GM12878 (cell line): ENCODE measurements at regions of chr5 and their contacts with region 1.

Region 1: GRCh38 chr5:126354012-126354857 is 69.0 kb upstream of the GRAMD2B start:
- DNase-seq: peak; percentile 38
- ATAC-seq: peak; percentile 43
- H3K4me3 ChIP-seq: no peak overlapping the region
- H3K27ac ChIP-seq: no peak overlapping the region
- H3K4me1 ChIP-seq: peaks cover 4% of the 10 kb centered on the region; the same call in 1 of the 2 replicates
- H3K27me3 ChIP-seq: no peaks in the 10 kb centered on the region
- CTCF ChIP-seq: peak; percentile 39 to 74 (median 58); a peak in 5 of 6 replicates
- EP300 ChIP-seq: no peak
- POLR2A ChIP-seq: no peak
- RAD21 ChIP-seq: peak; percentile 91

Region 2: GRCh38 chr5:126369967-126370731 is 15.9 kb after region 1 on chr5:
- CTCF ChIA-PET with region 1: interaction called, 6 read pairs
- POLR2A ChIA-PET with region 1: no interaction called
- RAD21 ChIA-PET with region 1: interaction called, 3 read pairs
- SMC1A ChIA-PET with region 1: interaction called, 13 read pairs
- in situ Hi-C with region 1: no loop called
- intact Hi-C with region 1: no loop called
- DNase-seq: no peak
- ATAC-seq: peak; percentile 34; the same call in 1 of the 3 replicates
- H3K4me3 ChIP-seq: no peak overlapping the region
- H3K27ac ChIP-seq: no peak overlapping the region
- H3K4me1 ChIP-seq: no peaks in the 10 kb centered on the region
- H3K27me3 ChIP-seq: no peaks in the 10 kb centered on the region
- CTCF ChIP-seq: no peak
- EP300 ChIP-seq: no peak
- POLR2A ChIP-seq: no peak
- RAD21 ChIP-seq: no peak

Region 3: GRCh38 chr5:126443374-126443851 is 89.2 kb after region 1 on chr5:
- CTCF ChIA-PET with region 1: no interaction called
- POLR2A ChIA-PET with region 1: no interaction called
- RAD21 ChIA-PET with region 1: interaction called, 4 read pairs
- SMC1A ChIA-PET with region 1: interaction called, 4 read pairs
- in situ Hi-C with region 1: no loop called
- intact Hi-C with region 1: loop called (anchors 1 kb)
- DNase-seq: peak; percentile 75
- ATAC-seq: peak; percentile 85
- H3K4me3 ChIP-seq: no peak overlapping the region; the same call in 1 of the 2 replicates
- H3K27ac ChIP-seq: peak overlapping the region; percentile 56; the same call in 1 of the 2 replicates
- H3K4me1 ChIP-seq: peaks cover 36% of the 10 kb centered on the region
- H3K27me3 ChIP-seq: no peaks in the 10 kb centered on the region
- CTCF ChIP-seq: no peak
- EP300 ChIP-seq: peak; percentile 79 to 86; a peak in 3 of 4 replicates
- POLR2A ChIP-seq: no peak
- RAD21 ChIP-seq: 0 out of 2 replicates have a peak, but pooled peaks have one; percentile 3

Region 4: DNA sequence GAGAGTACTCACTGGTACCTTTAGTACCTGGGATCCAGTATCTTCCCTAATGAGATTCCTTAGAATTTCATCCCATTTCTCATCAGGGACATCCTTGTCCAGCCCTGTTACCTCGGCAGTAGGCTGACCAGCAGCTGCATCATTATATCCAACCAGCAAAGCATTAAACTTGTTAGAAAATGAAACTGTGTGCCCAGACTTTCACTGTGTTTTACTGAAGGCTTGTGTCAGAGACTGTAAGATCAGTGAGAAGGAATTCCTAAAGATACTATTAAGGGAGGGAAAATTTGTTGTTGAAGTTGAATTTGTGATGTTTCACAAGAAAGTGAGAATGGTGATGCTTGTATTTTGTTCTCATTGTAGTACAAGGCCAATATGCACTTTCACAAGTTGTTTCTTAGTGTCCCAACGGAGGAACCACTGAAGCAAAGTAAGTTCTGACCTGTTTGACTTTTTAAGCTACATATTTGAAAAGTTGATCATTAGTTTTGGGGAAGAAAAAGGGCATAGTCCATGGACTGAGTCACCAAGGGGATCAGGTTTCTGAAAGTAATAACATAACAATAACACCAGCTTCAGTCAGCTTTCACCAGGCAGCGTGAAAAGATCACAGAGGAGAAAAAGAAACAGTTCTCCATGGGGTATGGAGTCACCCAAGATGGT is 117.8 kb after region 1 on chr5:
- CTCF ChIA-PET with region 1: interaction called, 3 read pairs
- POLR2A ChIA-PET with region 1: no interaction called
- RAD21 ChIA-PET with region 1: no interaction called
- SMC1A ChIA-PET with region 1: interaction called, 11 read pairs
- in situ Hi-C with region 1: no loop called
- intact Hi-C with region 1: no loop called
- DNase-seq: no peak
- ATAC-seq: no peak
- H3K4me3 ChIP-seq: no peak overlapping the region
- H3K27ac ChIP-seq: no peak overlapping the region
- H3K4me1 ChIP-seq: no peaks in the 10 kb centered on the region
- H3K27me3 ChIP-seq: no peaks in the 10 kb centered on the region
- CTCF ChIP-seq: no peak
- EP300 ChIP-seq: no peak
- POLR2A ChIP-seq: no peak
- RAD21 ChIP-seq: no peak

Region 5: DNA sequence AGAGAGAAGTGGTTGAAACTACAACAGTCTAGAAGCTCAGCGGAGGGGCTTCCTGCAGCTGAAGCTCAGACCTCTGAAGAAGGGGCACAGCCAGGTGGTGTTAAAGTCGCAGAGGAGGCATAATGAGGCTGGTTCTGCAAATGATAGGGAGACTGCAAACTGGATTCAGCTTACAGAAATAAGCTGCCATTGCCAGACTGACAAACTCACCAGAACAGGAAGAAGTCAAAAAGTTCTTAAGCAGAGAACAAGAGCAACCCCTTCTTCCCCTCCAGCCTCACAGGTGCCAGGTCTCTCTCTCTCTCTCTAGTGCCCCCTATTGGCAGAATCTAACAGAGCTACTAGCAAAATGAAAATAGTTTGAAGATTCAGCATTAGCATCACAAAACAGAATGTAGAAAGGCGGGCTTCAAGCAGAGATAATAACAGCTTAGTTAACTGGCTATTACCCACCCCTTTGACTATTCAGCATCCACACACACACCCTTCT is 145.7 kb after region 1 on chr5:
- CTCF ChIA-PET with region 1: interaction called, 133 read pairs
- POLR2A ChIA-PET with region 1: interaction called, 3 read pairs
- RAD21 ChIA-PET with region 1: interaction called, 20 read pairs
- SMC1A ChIA-PET with region 1: interaction called, 40 read pairs
- in situ Hi-C with region 1: no loop called
- intact Hi-C with region 1: loop called (anchors 2 kb)
- DNase-seq: no peak
- ATAC-seq: peak; percentile 84
- H3K4me3 ChIP-seq: no peak overlapping the region
- H3K27ac ChIP-seq: no peak overlapping the region
- H3K4me1 ChIP-seq: no peaks in the 10 kb centered on the region
- H3K27me3 ChIP-seq: no peaks in the 10 kb centered on the region
- CTCF ChIP-seq: peak; percentile 54 to 69 (median 69)
- EP300 ChIP-seq: no peak
- POLR2A ChIP-seq: no peak
- RAD21 ChIP-seq: peak; percentile 74

Region 6: DNA sequence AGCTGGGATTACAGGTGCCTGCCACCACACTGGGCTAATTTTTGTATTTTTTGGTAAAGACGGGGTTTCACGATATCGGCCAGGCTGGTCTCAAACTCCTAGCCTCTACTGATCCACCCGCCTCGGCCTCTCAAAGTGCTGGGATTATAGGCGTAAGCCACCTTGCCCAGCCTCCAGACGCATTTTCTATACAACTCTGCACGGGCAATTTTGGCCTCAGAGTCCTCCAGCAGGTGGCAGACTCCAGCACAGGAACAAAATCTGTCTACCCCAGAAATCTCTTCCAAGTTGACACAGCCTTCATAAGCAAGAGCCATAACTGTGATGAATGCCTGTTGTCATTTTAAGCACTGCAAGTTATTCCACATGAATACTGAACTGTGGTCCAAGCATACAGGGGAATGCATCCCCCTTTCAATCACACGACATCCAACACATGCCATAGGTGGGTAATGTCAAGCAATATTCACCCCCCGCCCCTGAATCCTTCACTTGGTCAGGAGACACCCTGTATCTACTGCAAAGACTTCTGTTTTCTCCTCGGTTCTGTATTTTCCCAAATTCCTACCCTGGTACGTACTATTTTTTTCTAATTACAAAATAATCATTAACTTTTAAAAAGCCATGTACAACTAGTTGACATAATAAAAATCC is 190.0 kb after region 1 on chr5:
- CTCF ChIA-PET with region 1: interaction called, 136 read pairs
- POLR2A ChIA-PET with region 1: no interaction called
- RAD21 ChIA-PET with region 1: interaction called, 14 read pairs
- SMC1A ChIA-PET with region 1: interaction called, 18 read pairs
- in situ Hi-C with region 1: loop called (anchors 5 kb)
- intact Hi-C with region 1: loop called (anchors 1 kb)
- DNase-seq: no peak
- ATAC-seq: peak; percentile 90
- H3K4me3 ChIP-seq: no peak overlapping the region
- H3K27ac ChIP-seq: no peak overlapping the region
- H3K4me1 ChIP-seq: no peaks in the 10 kb centered on the region
- H3K27me3 ChIP-seq: no peaks in the 10 kb centered on the region
- CTCF ChIP-seq: peak; percentile 60 to 76 (median 75)
- EP300 ChIP-seq: no peak
- POLR2A ChIP-seq: no peak
- RAD21 ChIP-seq: peak; percentile 64

Region 7: DNA sequence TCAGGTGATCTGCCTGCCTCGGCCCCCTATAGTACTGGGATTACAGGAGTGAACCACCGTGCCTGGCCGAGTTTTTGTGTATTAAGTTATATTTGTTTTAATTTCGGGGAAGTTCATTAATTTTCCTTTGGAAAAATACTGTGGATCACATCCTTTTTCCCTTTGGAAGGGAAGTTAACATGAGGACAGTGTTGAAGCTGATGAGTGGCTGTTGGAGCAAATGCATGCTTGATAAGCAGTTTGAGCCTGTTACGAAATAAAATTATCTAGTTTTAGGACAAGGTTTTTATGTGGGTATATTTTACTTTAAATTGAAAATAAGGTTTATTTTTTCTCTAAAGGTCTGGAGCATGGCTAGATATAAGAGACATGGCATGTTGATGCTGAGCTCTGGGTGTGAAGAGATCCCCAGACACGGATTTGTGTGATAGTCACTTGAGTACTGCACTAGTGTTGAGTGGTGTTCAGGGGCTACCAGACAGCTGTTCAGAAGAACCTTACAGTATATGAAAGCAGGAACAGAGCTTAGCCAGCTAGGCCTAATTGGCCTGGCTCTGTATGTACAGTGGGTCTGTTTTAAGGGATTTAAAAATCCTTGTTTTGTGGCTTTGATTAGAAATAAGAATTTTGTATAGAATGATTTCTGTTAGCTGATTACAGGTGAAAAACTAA is 440.1 kb after region 1 on chr5:
- CTCF ChIA-PET with region 1: no interaction called
- POLR2A ChIA-PET with region 1: no interaction called
- RAD21 ChIA-PET with region 1: no interaction called
- SMC1A ChIA-PET with region 1: no interaction called
- in situ Hi-C with region 1: loop called (anchors 10 kb)
- intact Hi-C with region 1: loop called (anchors 10 kb)
- DNase-seq: no peak
- ATAC-seq: peak; percentile 47
- H3K4me3 ChIP-seq: no peak overlapping the region
- H3K27ac ChIP-seq: peak overlapping the region; percentile 2; the same call in 1 of the 2 replicates
- H3K4me1 ChIP-seq: peaks cover 23% of the 10 kb centered on the region
- H3K27me3 ChIP-seq: no peaks in the 10 kb centered on the region
- CTCF ChIP-seq: no peak
- EP300 ChIP-seq: no peak
- POLR2A ChIP-seq: no peak
- RAD21 ChIP-seq: no peak